Activated naive CD4-positive, alpha-beta T cell treated with anti-CD3 and anti-CD28 coated beads for 36 hours (primary cell): ENCODE measurements at regions of chr19 and their contacts with region 1.

Region 1: GRCh38 chr19:46661020-46661731 is at the start of gene DACT3:
- DNase-seq: peak; percentile 100
- H3K4me3 Mint-ChIP-seq: peak within 1 kb of the TSS; percentile 75
- H3K27ac Mint-ChIP-seq: no peak within 1 kb of the TSS
- H3K4me1 Mint-ChIP-seq: peaks cover 29% of the 10 kb centered on the region
- H3K27me3 Mint-ChIP-seq: peaks cover 16% of the 10 kb centered on the region
- total RNA-seq, gene DACT3: 2.4 to 3.0 TPM

Region 2: DNA sequence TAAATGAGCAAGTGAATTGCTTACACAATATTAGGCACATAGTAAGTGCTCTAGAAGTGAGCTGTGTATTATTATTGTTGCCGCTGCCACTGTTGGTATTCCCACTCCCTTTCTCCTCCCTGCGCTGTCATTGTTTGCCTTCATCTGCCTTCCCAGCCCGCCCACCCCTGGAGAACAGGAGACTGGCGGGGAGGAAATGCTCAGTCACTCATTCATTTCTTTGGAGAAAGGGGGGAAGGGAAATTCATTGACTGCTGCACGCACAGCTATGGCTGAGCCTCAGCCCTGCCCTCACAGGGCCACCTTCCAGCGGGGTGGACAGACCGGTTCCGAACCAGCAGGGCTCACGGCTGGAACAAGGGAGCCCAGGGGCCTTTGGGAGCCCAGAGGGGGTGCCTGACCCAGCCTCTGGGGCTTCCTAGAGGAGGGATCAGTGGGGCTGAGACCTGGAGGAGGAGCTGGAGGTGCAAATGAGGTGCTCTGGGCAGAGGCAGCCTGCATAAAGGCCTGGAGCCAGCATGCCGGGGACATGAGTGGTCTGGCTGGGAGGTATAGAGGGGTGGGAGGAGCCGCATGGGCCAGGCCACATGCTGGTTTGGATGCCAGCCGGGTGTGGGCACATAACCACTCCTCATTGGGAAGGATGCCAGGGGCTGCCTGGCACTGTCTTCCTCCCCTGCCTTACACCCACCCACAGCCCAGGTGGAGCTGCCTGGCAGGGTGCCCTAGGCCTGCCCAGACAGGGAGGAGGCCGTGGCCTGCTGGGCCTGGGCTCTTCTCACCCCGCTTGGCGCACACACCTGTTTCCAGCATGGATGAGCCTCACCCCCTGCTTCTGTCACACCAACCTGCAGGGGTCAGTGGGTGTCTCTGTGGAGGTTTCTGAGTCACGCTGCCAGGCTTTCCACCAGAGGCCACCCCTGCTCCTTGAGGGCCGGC is 287.5 kb before region 1 on chr19:
- CTCF ChIA-PET with region 1: no interaction called
- intact Hi-C with region 1: no loop called
- DNase-seq: no peak
- H3K4me3 Mint-ChIP-seq: no peak overlapping the region
- H3K27ac Mint-ChIP-seq: no peak overlapping the region
- H3K4me1 Mint-ChIP-seq: peaks cover 17% of the 10 kb centered on the region
- H3K27me3 Mint-ChIP-seq: no peaks in the 10 kb centered on the region

Region 3: DNA sequence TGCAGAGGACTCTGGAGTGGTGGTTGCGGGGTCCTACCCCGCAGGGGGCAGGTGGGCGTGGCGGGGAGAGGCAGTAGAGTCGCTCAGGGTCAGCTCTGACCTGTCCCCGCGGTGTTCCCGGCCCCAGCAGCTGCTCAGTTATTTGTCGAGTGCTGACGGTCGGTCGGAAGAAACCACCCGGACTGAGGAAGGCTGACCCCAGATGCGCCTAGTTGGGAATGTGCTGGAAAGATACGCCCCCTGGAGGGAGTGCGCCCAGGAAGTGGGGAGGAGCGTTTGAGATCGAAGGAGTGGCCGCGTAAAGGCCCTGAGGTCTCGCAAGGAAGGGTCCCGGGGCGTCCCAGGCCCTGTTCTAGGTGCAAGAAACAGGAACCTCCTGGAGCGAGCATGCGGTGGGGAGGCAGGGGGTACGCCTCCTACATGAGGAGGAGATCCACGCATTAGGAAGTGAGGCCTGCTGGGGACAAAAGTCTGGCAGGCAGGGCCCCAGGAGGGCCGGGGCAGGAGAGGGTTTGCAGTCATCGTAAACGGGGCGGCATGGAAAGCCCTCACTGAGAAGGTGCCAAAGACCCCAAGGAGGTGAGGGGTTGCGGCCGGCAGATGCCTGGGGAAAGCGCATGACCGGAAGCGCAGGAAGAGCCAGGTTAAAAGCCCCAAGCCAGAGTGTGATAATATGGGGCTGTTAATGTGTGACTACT is 257.0 kb before region 1 on chr19:
- CTCF ChIA-PET with region 1: no interaction called
- intact Hi-C with region 1: loop called (anchors 5 kb)
- DNase-seq: no peak
- H3K4me3 Mint-ChIP-seq: peak overlapping the region; percentile 54
- H3K27ac Mint-ChIP-seq: no peak overlapping the region
- H3K4me1 Mint-ChIP-seq: peaks cover 17% of the 10 kb centered on the region
- H3K27me3 Mint-ChIP-seq: peaks cover 63% of the 10 kb centered on the region

Region 4: GRCh38 chr19:46564701-46565100 is 96.5 kb before region 1 on chr19:
- CTCF ChIA-PET with region 1: no interaction called
- intact Hi-C with region 1: no loop called
- DNase-seq: no peak
- H3K4me3 Mint-ChIP-seq: no peak overlapping the region
- H3K27ac Mint-ChIP-seq: no peak overlapping the region
- H3K4me1 Mint-ChIP-seq: no peaks in the 10 kb centered on the region
- H3K27me3 Mint-ChIP-seq: no peaks in the 10 kb centered on the region

Region 5: GRCh38 chr19:46600384-46601317 is 60.5 kb before region 1 on chr19:
- CTCF ChIA-PET with region 1: interaction called, 21 read pairs
- intact Hi-C with region 1: loop called (anchors 1 kb)
- DNase-seq: peak; percentile 97
- H3K4me3 Mint-ChIP-seq: peak overlapping the region; percentile 96
- H3K27ac Mint-ChIP-seq: peak overlapping the region; percentile 100
- H3K4me1 Mint-ChIP-seq: peaks cover 32% of the 10 kb centered on the region
- H3K27me3 Mint-ChIP-seq: no peaks in the 10 kb centered on the region

Region 6: GRCh38 chr19:46624958-46625661 is 36.1 kb before region 1 on chr19 and contains the start of gene PTGIR:
- CTCF ChIA-PET with region 1: interaction called, 178 read pairs
- intact Hi-C with region 1: no loop called
- DNase-seq: peak; percentile 78
- H3K4me3 Mint-ChIP-seq: peak within 1 kb of the TSS; percentile 90
- H3K27ac Mint-ChIP-seq: peak within 1 kb of the TSS; percentile 87
- H3K4me1 Mint-ChIP-seq: peaks cover 54% of the 10 kb centered on the region
- H3K27me3 Mint-ChIP-seq: no peaks in the 10 kb centered on the region
- total RNA-seq, gene PTGIR: 16.3 to 17.2 TPM

Region 7: GRCh38 chr19:46674416-46675183 is 13.4 kb after region 1 on chr19:
- CTCF ChIA-PET with region 1: interaction called, 13 read pairs
- intact Hi-C with region 1: no loop called
- DNase-seq: no peak
- H3K4me3 Mint-ChIP-seq: no peak overlapping the region
- H3K27ac Mint-ChIP-seq: no peak overlapping the region
- H3K4me1 Mint-ChIP-seq: peaks cover 5% of the 10 kb centered on the region
- H3K27me3 Mint-ChIP-seq: no peaks in the 10 kb centered on the region

Region 8: GRCh38 chr19:46699488-46699887 is 38.3 kb after region 1 on chr19:
- CTCF ChIA-PET with region 1: no interaction called
- intact Hi-C with region 1: no loop called
- DNase-seq: no peak
- H3K4me3 Mint-ChIP-seq: no peak overlapping the region
- H3K27ac Mint-ChIP-seq: no peak overlapping the region
- H3K4me1 Mint-ChIP-seq: peaks cover under 1% of the 10 kb centered on the region
- H3K27me3 Mint-ChIP-seq: no peaks in the 10 kb centered on the region

Region 9: GRCh38 chr19:46728693-46729676 is 67.8 kb after region 1 on chr19:
- CTCF ChIA-PET with region 1: interaction called, 6 read pairs
- intact Hi-C with region 1: loop called (anchors 2 kb)
- DNase-seq: peak; percentile 82
- H3K4me3 Mint-ChIP-seq: no peak overlapping the region
- H3K27ac Mint-ChIP-seq: no peak overlapping the region
- H3K4me1 Mint-ChIP-seq: peaks cover 14% of the 10 kb centered on the region
- H3K27me3 Mint-ChIP-seq: no peaks in the 10 kb centered on the region